Calu3 (cell line): ENCODE measurements at regions of chr11 and their contacts with region 1.

Region 1: DNA sequence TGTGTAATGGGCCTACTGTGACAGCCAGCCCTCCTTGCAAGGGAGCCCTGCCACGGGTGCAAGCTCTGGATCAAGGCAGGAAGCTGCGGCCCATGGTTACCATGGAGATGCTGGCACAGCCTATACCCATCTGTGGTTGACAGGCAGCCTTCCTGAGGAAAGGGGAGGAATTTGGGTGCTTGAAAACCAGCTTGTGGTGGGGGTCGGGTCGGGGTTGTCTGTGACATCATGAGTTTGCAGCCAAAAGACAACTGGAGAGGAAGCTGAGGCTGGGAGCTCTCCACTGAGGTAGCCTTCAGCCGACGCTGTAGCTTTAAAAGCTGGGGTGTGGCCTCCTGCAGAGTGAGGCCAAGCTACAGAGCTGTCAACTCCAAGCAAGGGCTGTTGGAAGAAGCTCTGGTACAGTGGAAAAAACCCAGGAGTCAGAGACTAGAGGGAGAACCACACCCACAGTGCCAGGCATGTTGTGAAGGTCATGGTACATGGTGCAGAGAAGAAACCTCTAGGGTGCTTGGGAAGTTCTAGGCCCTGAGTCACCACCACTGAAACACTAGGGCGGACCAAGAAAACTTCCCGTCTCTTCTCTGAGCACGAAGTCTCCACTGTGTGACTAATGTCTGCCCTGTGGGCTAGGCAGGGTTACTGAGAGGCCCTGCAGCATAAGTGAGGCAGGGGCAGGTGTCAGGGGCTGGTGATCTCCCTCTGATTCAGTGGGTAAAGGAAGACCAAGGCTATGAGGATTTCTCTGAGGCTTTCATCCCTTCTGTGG is 10.8 kb upstream of the LDHA start:
- DNase-seq: peak; percentile 78
- H3K4me3 Mint-ChIP-seq: peak overlapping the region; percentile 61
- H3K27ac Mint-ChIP-seq: peak overlapping the region; percentile 98
- H3K4me1 Mint-ChIP-seq: peaks cover 41% of the 10 kb centered on the region
- H3K27me3 Mint-ChIP-seq: no peaks in the 10 kb centered on the region
- CTCF ChIP-seq: no peak

Region 2: DNA sequence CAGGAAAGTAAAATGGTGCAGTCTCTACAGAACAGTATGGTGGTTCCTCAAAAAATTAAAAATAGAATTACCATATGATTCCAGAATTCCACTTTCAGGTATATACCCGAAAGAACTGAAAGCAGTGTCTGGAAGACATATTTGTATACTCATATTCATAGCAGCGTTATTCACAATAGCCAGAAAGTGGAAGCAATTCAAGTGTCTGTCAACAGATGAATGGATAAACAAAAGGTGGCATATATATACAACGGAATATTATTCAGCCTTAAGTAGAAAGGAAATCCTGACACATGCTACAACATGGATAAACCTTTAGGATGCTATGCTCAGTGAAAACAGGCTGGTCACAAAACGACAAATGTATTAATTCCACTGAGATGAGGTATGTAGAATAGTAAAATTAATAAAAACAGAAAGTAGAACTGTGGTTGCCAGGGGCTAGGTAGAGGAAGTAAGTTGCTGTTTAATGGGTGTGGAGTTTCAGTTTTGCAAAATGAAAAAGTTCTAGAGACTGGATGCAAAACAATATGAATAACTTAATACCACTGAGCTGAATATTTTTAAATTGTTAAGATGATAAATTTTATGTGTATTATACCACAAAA is 103.0 kb before region 1 on chr11:
- CTCF ChIA-PET with region 1: no interaction called
- intact Hi-C with region 1: no loop called
- DNase-seq: no peak
- H3K4me3 Mint-ChIP-seq: no peak overlapping the region
- H3K27ac Mint-ChIP-seq: no peak overlapping the region
- H3K4me1 Mint-ChIP-seq: no peaks in the 10 kb centered on the region
- H3K27me3 Mint-ChIP-seq: no peaks in the 10 kb centered on the region
- CTCF ChIP-seq: no peak

Region 3: DNA sequence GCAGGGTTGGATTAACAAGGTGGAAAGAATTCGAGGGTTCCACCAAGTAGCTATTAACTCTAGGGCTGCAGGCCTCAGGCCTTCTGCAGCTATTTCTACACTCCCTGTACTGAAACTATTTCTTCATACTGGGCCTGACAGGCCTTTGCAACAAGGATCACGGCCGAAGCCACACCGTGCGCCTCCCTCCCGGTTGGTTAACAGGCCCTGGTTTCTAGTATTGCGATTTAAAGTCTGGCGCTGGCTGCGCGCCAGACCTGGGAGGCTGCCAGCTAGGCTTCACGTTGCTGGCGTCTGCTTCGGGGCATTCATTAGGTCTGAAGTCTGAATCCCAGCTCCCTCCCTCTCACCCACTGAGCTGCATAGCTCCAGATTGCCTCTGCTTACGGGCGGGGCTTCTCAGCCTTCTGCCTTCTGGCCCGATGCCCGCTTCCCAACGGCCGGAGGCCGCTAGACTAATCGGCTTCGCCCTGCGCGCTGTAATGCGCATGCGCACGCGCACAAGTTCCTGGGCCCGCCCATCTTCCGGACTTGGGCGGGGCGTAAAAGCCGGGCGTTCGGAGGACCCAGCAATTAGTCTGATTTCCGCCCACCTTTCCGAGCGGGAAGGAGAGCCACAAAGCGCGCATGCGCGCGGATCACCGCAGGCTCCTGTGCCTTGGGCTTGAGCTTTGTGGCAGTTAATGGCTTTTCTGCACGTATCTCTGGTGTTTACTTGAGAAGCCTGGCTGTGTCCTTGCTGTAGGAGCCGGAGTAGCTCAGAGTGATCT is 12.3 kb after region 1 on chr11:
- CTCF ChIA-PET with region 1: interaction called, 41 read pairs
- intact Hi-C with region 1: loop called (anchors 1 kb)
- DNase-seq: peak; percentile 98
- H3K4me3 Mint-ChIP-seq: peak overlapping the region; percentile 98
- H3K27ac Mint-ChIP-seq: peak overlapping the region; percentile 98
- H3K4me1 Mint-ChIP-seq: no peaks in the 10 kb centered on the region
- H3K27me3 Mint-ChIP-seq: no peaks in the 10 kb centered on the region
- CTCF ChIP-seq: no peak